Mucosa of descending colon (tissue), 3 donors: ENCODE measurements at regions of chr7 and their contacts with region 1.

Region 1: DNA sequence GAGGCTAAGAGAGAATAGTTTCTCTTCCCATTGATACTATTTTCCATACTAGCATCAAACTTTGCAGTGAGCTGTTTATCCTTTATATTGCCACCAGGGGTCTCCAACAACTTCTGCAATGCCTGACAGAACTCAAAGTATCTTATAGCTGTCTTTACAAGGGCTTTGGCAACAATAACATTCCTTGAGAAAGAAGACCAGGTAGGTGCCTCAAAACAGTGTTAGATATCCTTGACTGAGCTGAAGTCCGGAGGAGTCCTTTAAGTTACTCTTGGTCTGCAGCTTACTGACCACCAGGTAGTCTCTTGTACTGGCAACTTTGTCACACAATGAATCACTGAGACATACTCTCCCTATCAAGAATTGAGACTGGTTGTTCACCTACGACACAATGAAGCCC is 30.0 kb upstream of the TES start:
- DNase-seq: peak in 1 of 3 donors; percentile 46
- ATAC-seq: peak; percentile 77
- H3K4me3 ChIP-seq: no peak overlapping the region
- H3K4me1 ChIP-seq: no peaks in the 10 kb centered on the region
- CTCF ChIP-seq: peak; percentile 20

Region 2: GRCh38 chr7:116236020-116236630 is 55.8 kb after region 1 on chr7:
- intact Hi-C with region 1: loop called (anchors 5 to 10 kb)
- DNase-seq: peak in 1 of 3 donors; percentile 87
- ATAC-seq: peak; percentile 42
- H3K4me3 ChIP-seq: no peak overlapping the region
- H3K4me1 ChIP-seq: peaks cover 23% of the 10 kb centered on the region
- CTCF ChIP-seq: no peak